Heart left ventricle (tissue), 16 donors: ENCODE measurements at regions of chr5 and their contacts with region 1.

Region 1: DNA sequence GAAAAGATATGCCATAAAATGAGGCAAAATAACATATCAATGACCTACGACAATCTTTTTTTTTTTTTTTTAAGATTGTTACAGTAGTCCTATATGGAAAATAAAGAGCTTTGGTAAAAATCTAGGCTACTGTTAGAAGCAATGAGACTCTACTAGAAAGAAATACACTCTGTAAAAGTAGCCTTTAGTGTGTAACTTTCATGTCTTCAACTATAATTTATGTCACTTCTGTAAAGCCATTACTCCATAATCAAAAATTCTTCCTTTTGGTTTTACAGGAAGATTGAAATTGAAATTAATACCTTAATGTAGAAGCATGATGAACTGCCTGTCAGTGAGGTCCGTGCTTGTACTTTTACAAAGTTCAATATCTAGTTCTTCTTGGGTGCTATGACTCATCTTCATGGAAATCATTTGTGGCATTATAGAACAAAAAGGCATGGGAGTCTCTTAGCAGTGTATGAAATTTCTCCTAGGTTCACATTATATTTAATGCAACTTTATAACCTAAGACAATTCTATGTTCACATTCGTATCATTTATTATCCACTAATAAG is 1393.1 kb downstream of the EFNA5 start:
- DNase-seq: no peak
- ATAC-seq: no peak
- H3K4me3 ChIP-seq: no peak overlapping the region
- H3K27ac ChIP-seq: no peak overlapping the region
- H3K4me1 ChIP-seq: no peaks in the 10 kb centered on the region
- H3K27me3 ChIP-seq: no peaks in the 10 kb centered on the region
- CTCF ChIP-seq: no peak
- POLR2A ChIP-seq: no peak

Region 2: GRCh38 chr5:106172681-106173532 is 104.7 kb before region 1 on chr5:
- intact Hi-C with region 1: no loop called
- DNase-seq: no peak
- ATAC-seq: no peak
- H3K4me3 ChIP-seq: no peak overlapping the region
- H3K27ac ChIP-seq: no peak overlapping the region
- H3K4me1 ChIP-seq: no peaks in the 10 kb centered on the region
- H3K27me3 ChIP-seq: no peaks in the 10 kb centered on the region
- CTCF ChIP-seq: no peak
- POLR2A ChIP-seq: no peak

Region 3: GRCh38 chr5:106361905-106362304 is 84.3 kb after region 1 on chr5:
- intact Hi-C with region 1: no loop called
- DNase-seq: no peak
- ATAC-seq: no peak
- H3K4me3 ChIP-seq: no peak overlapping the region
- H3K27ac ChIP-seq: no peak overlapping the region
- H3K4me1 ChIP-seq: no peaks in the 10 kb centered on the region
- H3K27me3 ChIP-seq: no peaks in the 10 kb centered on the region
- CTCF ChIP-seq: no peak
- POLR2A ChIP-seq: no peak

Region 4: GRCh38 chr5:106875591-106876297 is 598.1 kb after region 1 on chr5:
- intact Hi-C with region 1: loop called in 1 of 10 experiments (anchors 10 kb)
- DNase-seq: no peak
- ATAC-seq: peak in 3 of 4 donors; percentile 45 to 70 (median 46)
- H3K4me3 ChIP-seq: no peak overlapping the region
- H3K27ac ChIP-seq: no peak overlapping the region
- H3K4me1 ChIP-seq: no peaks in the 10 kb centered on the region
- H3K27me3 ChIP-seq: no peaks in the 10 kb centered on the region
- CTCF ChIP-seq: peak; percentile 27 to 63 (median 50)
- POLR2A ChIP-seq: no peak